Stomach (tissue), 19 donors: ENCODE measurements at regions of chr17 and their contacts with region 1.

Region 1: DNA sequence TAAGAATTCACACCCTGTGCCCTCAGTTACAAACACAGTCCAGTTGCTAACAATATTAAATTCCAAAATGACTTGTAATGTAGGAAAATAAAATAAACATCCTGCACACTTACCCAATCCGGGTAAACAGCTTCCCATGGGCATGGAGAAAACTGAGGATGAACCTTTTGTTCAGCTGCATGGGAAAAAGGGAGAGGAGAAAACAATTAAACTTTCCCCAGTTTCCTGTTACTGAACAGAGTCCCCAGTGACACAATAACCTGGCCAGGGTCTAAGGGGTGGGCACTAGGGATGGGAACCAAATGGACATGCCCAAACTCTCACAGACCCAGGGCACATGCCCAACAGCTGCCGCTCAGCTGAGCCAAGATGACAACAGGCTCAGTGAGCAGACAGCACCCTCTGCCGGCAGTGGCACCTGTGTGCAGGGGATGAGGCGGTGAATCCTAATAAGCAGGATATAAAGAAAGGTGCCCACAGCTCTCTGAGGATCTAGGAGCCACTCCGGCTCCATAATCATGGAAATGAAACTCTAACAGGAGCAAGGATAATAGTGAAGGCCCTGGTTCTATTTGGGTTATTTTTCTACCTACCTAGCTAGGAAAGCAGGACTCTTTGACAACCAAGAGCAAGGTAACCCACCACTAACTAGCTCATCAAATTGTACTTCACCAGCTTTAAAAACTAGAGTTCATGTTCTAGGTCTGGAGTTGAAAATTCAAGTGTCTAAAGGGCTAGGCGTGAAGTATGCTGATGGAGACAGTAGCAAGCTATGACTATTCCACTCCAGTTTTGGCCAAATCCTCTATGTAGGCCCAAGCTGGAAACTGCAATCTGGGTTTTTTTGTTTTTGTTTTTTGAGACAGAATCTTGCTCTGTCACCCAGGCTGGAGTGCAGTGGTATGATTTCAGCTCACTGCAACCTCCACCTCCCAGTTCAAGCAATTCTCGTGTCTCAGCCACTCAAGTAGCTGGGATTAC is 58.8 kb downstream of the SMG6 start:
- DNase-seq: peak; percentile 85 to 93
- H3K4me3 ChIP-seq: no peak overlapping the region
- H3K27ac ChIP-seq: peak overlapping the region in 4 of 5 donors; percentile 62 to 74 (median 70)
- H3K4me1 ChIP-seq: peaks cover 5 to 14% (median 11%) of the 10 kb centered on the region in 4 donors
- H3K27me3 ChIP-seq: no peaks in the 10 kb centered on the region
- CTCF ChIP-seq: peak in 5 of 7 experiments; percentile 94 to 98 (median 96)
- EP300 ChIP-seq: no peak
- POLR2A ChIP-seq: no peak

Region 2: DNA sequence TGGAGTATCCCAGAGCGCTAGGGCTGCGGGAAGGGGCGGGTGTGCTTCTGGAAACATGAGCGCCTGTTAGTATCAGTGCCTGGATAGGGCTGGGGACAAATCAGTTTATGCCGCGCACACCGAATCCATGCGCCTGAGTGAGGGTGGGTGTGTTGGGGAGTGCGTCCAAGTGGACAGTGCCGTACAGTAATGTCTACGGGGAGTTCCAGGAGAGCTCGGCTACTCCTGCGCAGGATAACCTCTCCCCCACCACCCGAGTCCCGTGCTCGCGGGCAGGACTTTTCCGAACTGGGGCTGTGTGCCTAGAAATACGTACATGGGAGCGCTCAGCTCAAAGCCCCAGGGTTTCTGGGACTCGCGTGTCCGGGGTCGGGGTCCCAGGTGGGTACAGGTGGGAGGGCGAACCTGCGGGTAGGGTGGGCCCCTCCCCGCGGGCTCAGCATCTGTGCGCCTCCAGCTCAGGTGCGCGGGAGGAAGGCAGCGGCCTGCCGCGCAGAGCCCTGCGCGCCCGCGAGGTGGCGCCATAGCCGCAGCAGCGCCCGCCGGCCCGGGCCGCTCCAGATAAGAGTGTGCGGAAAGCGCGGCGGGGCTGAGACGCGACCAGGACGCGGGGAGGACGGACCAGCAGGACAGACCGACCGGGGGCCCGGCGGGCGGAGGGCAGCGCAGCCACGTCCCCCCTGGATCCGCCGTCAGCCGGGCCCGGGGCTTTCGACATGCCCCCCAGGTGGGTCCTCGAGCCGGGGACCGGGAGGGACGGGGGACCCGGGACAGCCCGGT is 190.1 kb before region 1 on chr17 and contains the start of gene HIC1:
- intact Hi-C with region 1: loop called (anchors 5 kb)
- DNase-seq: peak; percentile 79 to 93
- H3K4me3 ChIP-seq: peak within 1 kb of the TSS; percentile 57 to 69 (median 64)
- H3K27ac ChIP-seq: peak within 1 kb of the TSS; percentile 84 to 94 (median 90)
- H3K4me1 ChIP-seq: peaks cover 70 to 86% (median 80%) of the 10 kb centered on the region in 4 donors
- H3K27me3 ChIP-seq: peaks cover 0 to 91% (median 70%) of the 10 kb centered on the region in 3 donors
- CTCF ChIP-seq: peak in 5 of 7 experiments; percentile 32 to 98 (median 95)
- EP300 ChIP-seq: no peak
- POLR2A ChIP-seq: no peak
- total RNA-seq, gene HIC1: 7.6 to 107 (median 9.4) TPM